Gastrocnemius medialis (tissue), 4 donors: ENCODE measurements at regions of chr10 and their contacts with region 1.

Region 1: DNA sequence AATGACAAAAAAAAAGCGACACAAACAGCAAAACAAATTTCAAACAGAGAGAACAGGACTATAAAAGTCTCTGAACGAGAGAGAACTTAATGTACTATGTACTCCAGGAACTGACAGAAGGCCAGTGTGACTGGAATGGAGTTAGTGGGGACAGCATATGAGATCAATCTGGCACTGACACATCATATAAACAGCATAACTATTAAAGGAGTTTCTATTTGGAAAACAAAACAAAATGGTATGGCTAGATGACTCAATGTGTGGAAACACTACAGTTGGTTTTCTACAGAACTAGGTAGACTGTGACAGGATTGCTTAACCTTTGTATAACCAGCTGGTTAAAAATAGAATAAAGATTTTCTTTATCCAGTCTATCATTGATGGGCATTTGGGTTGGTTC is 232.9 kb upstream of the KAT6B start:
- DNase-seq: no peak
- ATAC-seq: peak in 1 of 2 donors; percentile 42
- H3K4me3 ChIP-seq: no peak overlapping the region
- H3K27ac ChIP-seq: peak overlapping the region in 1 of 4 donors; percentile 48
- H3K4me1 ChIP-seq: peaks cover 39 to 46% of the 10 kb centered on the region in 2 donors
- H3K27me3 ChIP-seq: no peaks in the 10 kb centered on the region
- CTCF ChIP-seq: no peak
- POLR2A ChIP-seq: no peak

Region 2: GRCh38 chr10:74674927-74675326 is 81.5 kb after region 1 on chr10:
- in situ Hi-C with region 1: no loop called
- intact Hi-C with region 1: loop called (anchors 5 kb)
- DNase-seq: no peak
- ATAC-seq: no peak
- H3K4me3 ChIP-seq: no peak overlapping the region
- H3K27ac ChIP-seq: peak overlapping the region in 1 of 4 donors; percentile 47
- H3K4me1 ChIP-seq: peaks cover 32 to 59% of the 10 kb centered on the region in 2 donors
- H3K27me3 ChIP-seq: no peaks in the 10 kb centered on the region
- CTCF ChIP-seq: no peak
- POLR2A ChIP-seq: no peak

Region 3: DNA sequence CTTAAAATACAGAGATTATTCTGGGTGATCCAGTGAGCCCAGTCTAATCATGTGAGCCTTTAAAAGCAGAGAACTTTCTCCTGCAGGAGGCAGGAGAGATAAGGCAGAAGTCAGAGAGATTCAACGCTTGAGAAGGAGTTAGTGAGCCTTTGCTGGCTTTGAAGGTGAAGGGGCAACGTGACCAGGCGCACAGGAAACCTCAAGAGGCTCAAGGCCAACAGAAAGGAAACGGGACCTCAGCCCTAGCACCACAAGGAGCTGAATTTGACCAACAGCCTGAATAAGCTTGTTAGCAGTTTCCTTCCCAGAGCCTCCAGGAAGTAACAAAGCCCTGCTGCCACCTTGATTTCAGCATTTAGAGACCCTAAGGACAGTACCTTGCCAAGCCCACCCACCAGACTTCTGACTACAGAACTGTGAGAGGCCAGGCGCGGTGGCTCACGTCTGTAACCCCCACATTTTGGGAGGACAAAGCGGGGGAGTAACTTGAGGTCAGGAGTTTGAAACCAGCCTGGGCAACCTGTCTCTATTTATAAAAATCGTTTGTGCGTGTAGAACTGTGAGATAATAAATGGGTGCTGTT is 145.6 kb after region 1 on chr10:
- in situ Hi-C with region 1: no loop called
- intact Hi-C with region 1: no loop called
- DNase-seq: no peak
- ATAC-seq: no peak
- H3K4me3 ChIP-seq: no peak overlapping the region
- H3K27ac ChIP-seq: no peak overlapping the region
- H3K4me1 ChIP-seq: no peaks in the 10 kb centered on the region
- H3K27me3 ChIP-seq: no peaks in the 10 kb centered on the region
- CTCF ChIP-seq: peak in 1 of 5 experiments; percentile 6
- POLR2A ChIP-seq: no peak